ENCODE measurements at regions of chr14 and their contacts with region 1.

Region 1: DNA sequence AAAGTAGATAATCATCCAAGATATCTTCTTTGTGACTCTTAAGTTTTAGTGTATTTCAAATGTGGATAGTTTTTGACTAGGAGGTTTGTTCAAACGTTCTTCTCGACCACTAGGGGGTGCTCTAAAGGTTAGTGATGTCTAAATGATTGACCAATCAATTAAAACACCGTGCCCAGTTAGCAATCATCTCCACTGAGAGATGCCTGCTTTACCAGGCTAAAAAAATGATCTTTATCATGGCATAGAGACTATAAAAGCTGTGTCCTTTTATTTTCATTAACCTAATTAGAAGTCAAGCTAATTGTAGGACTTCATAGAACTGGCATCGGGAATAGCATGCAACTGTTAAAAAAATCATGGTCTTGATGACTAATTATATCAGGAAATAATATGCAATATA is 153.9 kb downstream of the PRKCH start:
- DNase-seq: no peak
- ATAC-seq: peak; percentile 48
- H3K4me3 ChIP-seq: no peak overlapping the region
- H3K27ac ChIP-seq: no peak overlapping the region
- H3K4me1 ChIP-seq: peaks cover 67% of the 10 kb centered on the region
- H3K27me3 ChIP-seq: no peaks in the 10 kb centered on the region
- CTCF ChIP-seq: peak; percentile 54 to 59 (median 57); a peak in 5 of 6 replicates
- EP300 ChIP-seq: no peak
- POLR2A ChIP-seq: no peak
- RAD21 ChIP-seq: peak; percentile 55

Region 2: GRCh38 chr14:61234215-61234916 is 240.9 kb before region 1 on chr14:
- CTCF ChIA-PET with region 1: no interaction called
- POLR2A ChIA-PET with region 1: no interaction called
- RAD21 ChIA-PET with region 1: no interaction called
- SMC1A ChIA-PET with region 1: no interaction called
- in situ Hi-C with region 1: no loop called
- intact Hi-C with region 1: no loop called
- DNase-seq: no peak
- ATAC-seq: no peak
- H3K4me3 ChIP-seq: no peak overlapping the region
- H3K27ac ChIP-seq: no peak overlapping the region
- H3K4me1 ChIP-seq: no peaks in the 10 kb centered on the region
- H3K27me3 ChIP-seq: no peaks in the 10 kb centered on the region
- CTCF ChIP-seq: no peak
- EP300 ChIP-seq: no peak
- POLR2A ChIP-seq: no peak
- RAD21 ChIP-seq: no peak

Region 3: DNA sequence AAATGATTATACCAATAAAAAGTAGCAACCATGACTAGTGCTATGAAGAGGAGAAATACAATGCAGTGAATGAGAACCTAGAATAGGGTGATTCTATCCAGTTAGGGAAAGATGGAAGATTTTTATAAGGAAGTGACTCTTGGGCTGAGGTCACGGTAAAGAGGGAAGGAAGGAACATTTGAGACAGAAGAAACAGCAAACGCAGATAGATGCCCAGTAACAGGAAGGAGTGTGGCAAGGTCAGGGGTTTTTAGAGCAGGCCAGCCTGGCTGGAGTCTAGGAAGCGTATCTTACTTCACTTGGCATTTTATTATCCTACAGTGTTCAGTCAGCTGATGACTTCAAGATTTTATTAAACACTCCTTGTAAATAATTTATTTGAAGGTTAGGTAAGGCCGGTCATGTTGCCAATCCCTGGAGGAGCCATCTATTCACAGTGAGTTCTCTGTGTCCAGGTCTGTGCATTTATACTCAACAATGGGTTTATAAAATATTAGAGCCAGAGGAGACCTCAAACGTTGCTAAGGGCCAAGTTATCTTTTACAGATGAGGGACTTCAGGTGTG is 16.6 kb after region 1 on chr14:
- CTCF ChIA-PET with region 1: interaction called, 10 read pairs
- POLR2A ChIA-PET with region 1: no interaction called
- RAD21 ChIA-PET with region 1: interaction called, 3 read pairs
- SMC1A ChIA-PET with region 1: interaction called, 8 read pairs
- in situ Hi-C with region 1: no loop called
- intact Hi-C with region 1: no loop called
- DNase-seq: no peak
- ATAC-seq: no peak
- H3K4me3 ChIP-seq: no peak overlapping the region
- H3K27ac ChIP-seq: no peak overlapping the region
- H3K4me1 ChIP-seq: no peaks in the 10 kb centered on the region
- H3K27me3 ChIP-seq: no peaks in the 10 kb centered on the region
- CTCF ChIP-seq: no peak
- EP300 ChIP-seq: no peak
- POLR2A ChIP-seq: no peak
- RAD21 ChIP-seq: no peak

Region 4: DNA sequence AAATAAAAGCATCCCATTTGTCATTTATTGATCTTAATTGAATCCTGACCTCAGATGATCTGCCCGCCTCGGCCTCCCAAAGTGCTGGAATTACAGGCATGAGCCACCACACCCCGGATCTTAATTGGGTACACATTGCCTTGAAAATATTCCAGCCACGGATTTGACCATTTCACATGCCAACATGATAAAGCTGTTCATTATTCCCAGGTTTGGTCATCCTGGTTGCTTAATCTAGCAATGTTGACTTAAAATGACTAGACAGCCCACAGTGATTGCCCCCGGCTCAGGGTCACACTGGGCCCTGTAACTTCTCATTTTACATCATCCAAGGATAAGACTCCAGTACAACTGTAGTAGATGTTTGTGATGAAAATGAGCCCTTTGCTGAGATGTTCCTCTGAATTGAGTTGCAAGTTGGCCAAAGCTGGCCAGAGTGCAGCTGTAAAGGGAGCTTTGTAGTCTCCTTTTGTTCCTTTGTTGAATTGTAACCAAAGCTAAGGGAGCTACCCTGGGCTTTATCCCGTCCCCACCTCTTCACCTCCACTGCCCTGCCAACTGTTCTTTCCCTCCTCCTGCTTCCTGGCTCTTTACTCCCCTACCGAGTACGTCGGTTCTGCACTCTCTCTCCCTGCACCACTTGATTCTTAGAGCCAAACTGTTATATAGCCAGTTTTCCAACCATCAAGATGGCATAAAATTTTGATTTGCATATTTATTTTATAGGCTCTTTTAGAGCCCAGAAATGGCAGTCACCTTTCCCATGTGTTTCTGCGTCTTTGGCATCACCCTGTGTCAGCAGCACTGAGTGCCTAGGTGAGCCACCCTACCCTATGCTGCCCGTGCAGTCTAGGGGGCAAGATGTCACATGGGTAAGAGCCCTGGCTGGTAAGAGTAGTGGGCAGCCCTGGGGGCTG is 78.7 kb after region 1 on chr14:
- CTCF ChIA-PET with region 1: interaction called, 6 read pairs
- POLR2A ChIA-PET with region 1: no interaction called
- RAD21 ChIA-PET with region 1: interaction called, 5 read pairs
- SMC1A ChIA-PET with region 1: interaction called, 12 read pairs
- in situ Hi-C with region 1: no loop called
- intact Hi-C with region 1: no loop called
- DNase-seq: no peak
- ATAC-seq: no peak
- H3K4me3 ChIP-seq: no peak overlapping the region
- H3K27ac ChIP-seq: no peak overlapping the region
- H3K4me1 ChIP-seq: peaks cover 15% of the 10 kb centered on the region
- H3K27me3 ChIP-seq: no peaks in the 10 kb centered on the region
- CTCF ChIP-seq: no peak
- EP300 ChIP-seq: no peak
- POLR2A ChIP-seq: no peak
- RAD21 ChIP-seq: no peak

Region 5: DNA sequence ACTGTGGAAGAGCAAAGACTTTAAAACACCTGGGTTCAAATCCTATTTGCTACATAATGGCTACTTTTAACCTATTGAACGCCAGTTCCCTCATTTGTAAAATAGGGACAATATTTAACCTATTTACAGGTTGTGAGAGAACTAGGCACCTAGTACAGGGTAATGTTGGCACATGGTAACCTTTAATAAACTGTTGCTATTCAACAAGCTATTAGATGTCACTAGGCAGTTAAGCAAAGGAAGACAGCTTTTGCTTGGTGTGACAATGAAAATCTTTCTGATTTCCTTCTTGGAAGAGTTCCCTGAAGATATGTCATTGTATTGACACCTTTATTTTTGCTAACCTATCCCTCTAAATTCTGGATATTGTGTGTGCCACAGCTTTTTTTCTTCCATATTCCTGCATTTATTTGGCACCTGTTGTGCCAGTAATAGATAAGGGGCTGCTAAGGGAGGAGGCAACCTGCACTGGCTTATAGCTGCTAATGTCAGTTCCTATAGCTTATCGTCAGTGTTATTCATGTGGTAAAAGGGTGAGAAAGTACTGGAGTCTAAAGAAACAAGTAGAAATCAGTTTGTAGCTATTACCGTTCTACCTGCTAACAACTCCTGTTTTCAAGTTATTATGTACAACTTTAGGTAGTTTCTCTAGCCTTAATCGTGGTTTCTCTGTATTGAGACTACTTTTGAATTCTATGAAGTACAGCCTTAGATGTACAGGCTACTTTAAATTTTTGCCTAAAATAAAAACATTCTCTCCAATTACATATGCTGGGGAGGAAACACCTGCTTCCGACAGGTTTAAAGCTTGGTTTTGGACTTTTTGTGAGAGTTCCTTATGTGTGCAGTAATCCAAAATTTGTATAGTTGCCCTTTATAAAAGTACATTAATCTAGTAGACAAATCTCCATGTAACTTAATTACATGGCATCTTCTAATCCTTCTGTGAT is 244.3 kb after region 1 on chr14:
- CTCF ChIA-PET with region 1: interaction called, 11 read pairs
- POLR2A ChIA-PET with region 1: no interaction called
- RAD21 ChIA-PET with region 1: interaction called, 8 read pairs
- SMC1A ChIA-PET with region 1: interaction called, 11 read pairs
- in situ Hi-C with region 1: no loop called
- intact Hi-C with region 1: no loop called
- DNase-seq: no peak
- ATAC-seq: peak; percentile 48
- H3K4me3 ChIP-seq: no peak overlapping the region; the same call in 1 of the 2 replicates
- H3K27ac ChIP-seq: peak overlapping the region; percentile 15; the same call in 1 of the 2 replicates
- H3K4me1 ChIP-seq: peaks cover 20% of the 10 kb centered on the region
- H3K27me3 ChIP-seq: no peaks in the 10 kb centered on the region
- CTCF ChIP-seq: no peak
- EP300 ChIP-seq: no peak
- POLR2A ChIP-seq: no peak
- RAD21 ChIP-seq: no peak

Region 6: GRCh38 chr14:61744239-61744638 is 268.9 kb after region 1 on chr14:
- CTCF ChIA-PET with region 1: interaction called, 13 read pairs
- POLR2A ChIA-PET with region 1: interaction called, 8 read pairs
- RAD21 ChIA-PET with region 1: interaction called, 4 read pairs
- SMC1A ChIA-PET with region 1: interaction called, 15 read pairs
- in situ Hi-C with region 1: no loop called
- intact Hi-C with region 1: no loop called
- DNase-seq: no peak
- ATAC-seq: no peak
- H3K4me3 ChIP-seq: no peak overlapping the region
- H3K27ac ChIP-seq: no peak overlapping the region
- H3K4me1 ChIP-seq: peaks cover 5% of the 10 kb centered on the region
- H3K27me3 ChIP-seq: no peaks in the 10 kb centered on the region
- CTCF ChIP-seq: no peak
- EP300 ChIP-seq: no peak
- POLR2A ChIP-seq: no peak
- RAD21 ChIP-seq: no peak